Upper lobe of right lung (tissue), 1 donor: ENCODE measurements at regions of chr14 and their contacts with region 1.

Region 1: DNA sequence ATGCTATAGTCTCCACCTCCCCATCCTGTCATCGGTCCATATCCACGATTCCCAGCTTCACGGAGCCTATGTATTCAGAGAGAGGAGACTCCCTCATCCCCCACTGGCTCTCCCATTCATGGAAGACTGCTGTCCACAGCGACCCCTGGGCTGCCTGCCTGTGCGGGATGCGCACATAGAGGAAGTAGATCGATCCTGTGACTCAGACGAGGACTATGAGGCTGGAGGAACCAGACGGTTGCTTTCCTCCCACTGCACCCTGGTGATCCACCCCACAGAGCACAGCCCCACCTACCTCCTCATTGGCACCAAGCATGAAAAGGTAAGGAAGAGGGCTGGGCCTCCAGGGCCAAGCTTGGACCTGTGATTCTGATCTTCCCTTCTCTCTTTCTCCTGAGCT is 24.4 kb downstream of the PIGH start:
- DNase-seq: peak; percentile 64
- ATAC-seq: peak; percentile 58
- H3K4me3 ChIP-seq: no peak overlapping the region
- H3K27ac ChIP-seq: no peak overlapping the region
- H3K4me1 ChIP-seq: no peaks in the 10 kb centered on the region
- H3K27me3 ChIP-seq: no peaks in the 10 kb centered on the region
- CTCF ChIP-seq: no peak

Region 2: DNA sequence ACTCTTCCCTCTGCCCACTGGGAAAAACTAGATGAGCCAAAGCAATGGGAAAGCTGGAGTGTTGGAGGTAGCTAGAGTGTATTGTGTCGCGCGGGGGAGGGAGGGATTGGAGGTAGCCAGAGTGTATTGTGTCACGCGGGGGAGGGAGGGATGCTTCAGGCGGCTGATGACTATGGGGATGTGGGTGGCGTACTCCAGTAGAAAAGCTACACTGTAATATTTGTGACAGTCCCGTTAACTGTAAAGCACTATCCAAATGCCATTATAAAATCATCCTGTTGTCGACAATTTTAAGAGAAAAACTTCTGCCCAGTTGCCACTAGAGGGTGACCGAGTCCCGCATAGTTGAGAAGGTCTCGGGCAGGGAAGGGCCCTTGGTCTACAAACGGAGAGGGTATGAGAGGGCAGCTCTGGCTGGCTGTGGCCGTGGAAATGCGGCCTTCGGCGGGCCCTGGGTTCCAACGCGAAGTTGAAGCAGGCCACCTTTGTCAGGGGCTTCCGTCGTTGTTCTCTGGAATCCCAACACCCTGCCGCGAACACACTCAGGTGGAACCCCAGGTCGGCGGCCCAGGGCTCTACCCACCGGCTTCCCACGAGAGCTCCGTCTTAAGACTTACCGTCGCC is 148.6 kb before region 1 on chr14:
- intact Hi-C with region 1: loop called (anchors 5 kb)
- DNase-seq: peak; percentile 81
- ATAC-seq: peak; percentile 90
- H3K4me3 ChIP-seq: no peak overlapping the region
- H3K27ac ChIP-seq: no peak overlapping the region
- H3K4me1 ChIP-seq: no peaks in the 10 kb centered on the region
- H3K27me3 ChIP-seq: peaks cover 7% of the 10 kb centered on the region
- CTCF ChIP-seq: peak; percentile 81

Region 3: DNA sequence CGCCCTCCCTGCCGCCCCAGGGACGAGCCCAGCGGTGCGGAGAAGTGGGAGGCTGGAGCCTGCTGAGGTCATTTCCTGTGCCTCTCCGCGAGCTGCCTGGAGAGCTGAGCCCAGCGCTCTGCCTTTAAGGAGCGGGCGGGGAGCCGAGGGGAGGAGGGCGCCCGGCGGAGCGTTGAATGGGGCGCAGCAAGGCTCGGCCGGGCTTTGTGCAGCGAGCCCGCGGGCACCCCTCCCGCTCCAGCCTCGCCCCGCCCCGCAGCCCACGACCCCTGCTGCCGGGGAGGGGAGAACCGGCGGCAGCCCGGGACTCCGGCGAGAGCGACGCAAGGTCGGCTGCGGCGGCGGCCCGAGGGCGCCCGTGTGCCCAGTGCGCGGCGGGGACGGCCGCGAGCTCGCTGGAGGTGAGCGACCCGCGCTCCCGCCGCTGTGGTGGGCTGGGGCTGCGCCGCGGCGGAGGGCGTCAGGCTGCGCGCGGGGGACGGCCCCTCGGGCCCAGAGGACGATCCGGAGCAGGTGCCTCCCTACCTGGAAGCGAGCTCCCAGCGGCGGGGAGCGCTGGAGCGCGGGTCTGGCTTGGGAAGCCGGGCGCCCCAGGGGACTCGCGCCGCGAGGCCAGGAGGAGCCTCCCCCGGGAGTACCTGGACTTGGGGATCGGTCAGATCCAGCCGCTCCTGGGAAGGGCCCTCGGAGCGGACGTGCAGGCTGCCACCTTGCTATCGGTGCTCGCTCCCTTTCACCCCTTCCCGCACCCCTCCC is 42.5 kb before region 1 on chr14 and contains the start of gene PLEKHH1:
- intact Hi-C with region 1: no loop called
- DNase-seq: peak; percentile 88
- ATAC-seq: peak; percentile 94
- H3K4me3 ChIP-seq: peak within 1 kb of the TSS; percentile 65
- H3K27ac ChIP-seq: peak within 1 kb of the TSS; percentile 17
- H3K4me1 ChIP-seq: peaks cover 4% of the 10 kb centered on the region
- H3K27me3 ChIP-seq: peaks cover 5% of the 10 kb centered on the region
- CTCF ChIP-seq: no peak
- total RNA-seq, gene PLEKHH1: 2.3 TPM

Region 4: GRCh38 chr14:67683842-67684241 is 108.2 kb after region 1 on chr14:
- intact Hi-C with region 1: no loop called
- DNase-seq: no peak
- ATAC-seq: no peak
- H3K4me3 ChIP-seq: no peak overlapping the region
- H3K27ac ChIP-seq: no peak overlapping the region
- H3K4me1 ChIP-seq: no peaks in the 10 kb centered on the region
- H3K27me3 ChIP-seq: no peaks in the 10 kb centered on the region
- CTCF ChIP-seq: no peak

Region 5: DNA sequence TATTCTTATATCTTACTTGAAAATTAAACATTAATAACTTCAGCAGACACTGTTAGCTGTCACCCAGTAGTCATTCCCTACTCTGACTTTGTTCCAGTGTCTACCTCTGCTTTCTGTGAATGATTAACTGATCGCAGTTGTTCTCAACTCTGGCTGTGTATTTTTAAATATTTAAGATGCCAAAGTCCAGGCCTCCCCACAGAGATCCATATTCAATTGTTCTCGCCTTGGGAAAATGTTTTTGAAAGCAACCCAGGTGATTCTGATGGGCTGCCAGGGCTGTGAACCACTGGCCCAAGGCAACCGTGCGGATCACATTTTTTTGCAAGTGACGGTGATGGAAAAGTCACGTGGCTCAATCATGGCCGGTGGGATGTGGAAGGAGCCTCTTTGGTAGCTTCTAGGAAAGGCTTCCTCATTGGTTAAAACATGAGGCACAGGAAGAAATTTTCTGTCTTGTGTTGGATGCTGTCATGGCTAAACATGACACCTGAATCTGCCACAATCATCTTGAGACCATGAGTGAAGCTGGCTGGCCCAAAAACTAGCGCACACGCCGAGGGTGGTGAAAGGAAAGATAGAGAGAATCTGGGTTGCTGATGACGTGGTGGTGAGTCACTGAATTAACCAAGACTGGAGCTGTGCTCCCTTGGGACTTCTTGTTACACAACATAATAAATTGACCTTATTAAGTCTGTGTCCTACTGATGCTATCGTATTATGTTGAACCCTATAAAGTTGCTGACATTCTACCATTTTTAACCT is 163.2 kb after region 1 on chr14:
- intact Hi-C with region 1: no loop called
- DNase-seq: no peak
- ATAC-seq: peak; percentile 39
- H3K4me3 ChIP-seq: no peak overlapping the region
- H3K27ac ChIP-seq: no peak overlapping the region
- H3K4me1 ChIP-seq: no peaks in the 10 kb centered on the region
- H3K27me3 ChIP-seq: no peaks in the 10 kb centered on the region
- CTCF ChIP-seq: no peak